A673 (cell line): ENCODE measurements at regions of chr11 and their contacts with region 1.

Region 1: GRCh38 chr11:112588252-112588694 is 327.6 kb upstream of the PLET1 start:
- DNase-seq: peak; percentile 97
- H3K4me3 ChIP-seq: no peak overlapping the region
- H3K27ac ChIP-seq: no peak overlapping the region
- H3K4me1 ChIP-seq: peaks cover 8% of the 10 kb centered on the region
- H3K27me3 ChIP-seq: no peaks in the 10 kb centered on the region
- CTCF ChIP-seq: peak; percentile 90

Region 2: DNA sequence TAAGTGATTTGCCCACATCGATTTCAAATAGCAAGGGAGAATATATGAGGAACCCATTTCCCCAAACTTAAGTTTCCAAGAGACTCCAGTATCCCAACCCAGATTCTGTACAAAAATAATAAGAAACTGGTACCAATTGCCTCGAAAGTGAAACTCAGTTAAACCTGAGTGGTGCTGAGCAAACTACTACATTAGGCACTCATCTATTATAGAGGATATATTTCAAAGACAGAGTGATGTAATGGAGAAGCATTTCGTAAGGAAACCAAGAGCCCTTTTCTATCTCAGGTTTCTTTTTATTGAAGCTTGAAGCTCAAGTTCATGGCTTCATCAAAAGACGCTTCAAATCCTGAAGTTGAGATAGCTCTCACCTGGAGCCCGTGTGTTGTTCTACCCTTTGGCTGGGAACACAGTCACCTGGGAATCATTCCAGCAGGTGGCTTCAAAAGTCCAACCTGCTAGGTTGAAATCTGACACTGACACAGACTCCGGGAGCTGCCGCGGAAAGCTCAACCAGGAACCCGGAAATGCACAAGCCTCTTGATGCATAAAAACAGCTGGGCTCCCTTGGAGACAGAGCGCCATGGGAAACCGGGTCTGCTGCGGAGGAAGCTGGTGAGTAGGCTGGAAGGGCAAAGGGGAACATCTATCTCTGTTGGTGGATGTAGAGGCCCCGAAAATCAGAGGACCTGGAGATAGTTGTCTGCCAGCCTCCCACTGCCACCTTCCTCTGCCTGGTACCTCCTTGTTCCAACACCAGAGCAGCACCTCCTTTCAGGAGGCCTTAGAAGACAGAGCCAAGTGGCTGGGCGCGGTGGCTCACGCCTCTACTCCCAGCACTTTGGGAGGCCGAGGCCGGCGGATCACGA is 669.6 kb before region 1 on chr11 and contains the start of gene C11orf52:
- CTCF ChIA-PET with region 1: no interaction called
- POLR2A ChIA-PET with region 1: no interaction called
- intact Hi-C with region 1: no loop called
- DNase-seq: peak; percentile 91
- H3K4me3 ChIP-seq: no peak within 1 kb of the TSS
- H3K27ac ChIP-seq: peak within 1 kb of the TSS; percentile 46
- H3K4me1 ChIP-seq: peaks cover 43% of the 10 kb centered on the region
- H3K27me3 ChIP-seq: no peaks in the 10 kb centered on the region
- CTCF ChIP-seq: no peak
- total RNA-seq, gene C11orf52: 1.4 and 1.5 TPM in 2 replicates

Region 3: DNA sequence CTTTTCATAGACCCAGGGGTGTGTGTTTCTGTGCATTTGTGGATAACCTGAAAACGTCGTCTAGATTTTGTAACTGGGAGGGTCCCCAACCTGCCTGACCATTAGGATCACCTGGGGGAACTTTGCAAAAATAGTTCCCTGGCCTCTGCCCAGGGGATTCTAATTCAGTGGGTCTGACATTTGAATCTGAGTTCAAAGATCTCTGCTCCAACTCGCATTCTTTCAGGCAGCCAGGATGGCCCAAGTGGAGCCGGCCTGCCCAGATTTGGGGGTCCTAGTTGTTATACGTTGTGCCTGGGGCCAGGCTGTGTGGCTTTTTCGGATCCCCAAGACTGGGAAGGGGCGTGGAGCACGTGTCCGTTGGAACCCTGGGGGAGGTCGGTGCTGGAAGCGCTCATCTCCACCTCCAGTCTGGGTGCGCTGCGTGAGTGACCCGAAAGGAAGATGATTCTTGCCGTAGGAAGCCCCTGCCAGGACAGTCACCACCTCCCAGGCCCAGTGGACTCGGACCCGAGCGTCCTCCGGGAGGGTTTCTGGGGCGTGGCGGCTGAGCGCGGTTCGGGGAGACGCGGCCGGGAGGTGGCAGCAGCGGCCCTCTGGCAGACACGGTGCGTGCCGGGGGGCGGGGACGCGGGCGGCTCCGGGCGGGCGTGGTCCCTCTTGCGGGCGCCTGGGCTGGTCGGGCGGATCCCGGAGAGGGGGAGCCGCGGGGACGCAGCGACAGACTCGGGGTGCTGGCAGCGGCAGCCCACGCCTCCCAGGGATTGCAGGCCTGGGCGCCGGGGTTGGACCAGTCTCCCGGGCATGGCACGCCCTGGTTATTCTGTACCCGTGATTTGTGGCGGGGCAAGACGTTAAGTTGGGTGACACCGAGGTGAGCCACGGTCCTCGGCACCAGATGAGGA is 298.4 kb before region 1 on chr11:
- CTCF ChIA-PET with region 1: no interaction called
- POLR2A ChIA-PET with region 1: no interaction called
- intact Hi-C with region 1: loop called (anchors 2 kb)
- DNase-seq: peak; percentile 93
- H3K4me3 ChIP-seq: peak overlapping the region; percentile 64
- H3K27ac ChIP-seq: peak overlapping the region; percentile 92
- H3K4me1 ChIP-seq: peaks cover 44% of the 10 kb centered on the region
- H3K27me3 ChIP-seq: no peaks in the 10 kb centered on the region
- CTCF ChIP-seq: peak; percentile 85

Region 4: DNA sequence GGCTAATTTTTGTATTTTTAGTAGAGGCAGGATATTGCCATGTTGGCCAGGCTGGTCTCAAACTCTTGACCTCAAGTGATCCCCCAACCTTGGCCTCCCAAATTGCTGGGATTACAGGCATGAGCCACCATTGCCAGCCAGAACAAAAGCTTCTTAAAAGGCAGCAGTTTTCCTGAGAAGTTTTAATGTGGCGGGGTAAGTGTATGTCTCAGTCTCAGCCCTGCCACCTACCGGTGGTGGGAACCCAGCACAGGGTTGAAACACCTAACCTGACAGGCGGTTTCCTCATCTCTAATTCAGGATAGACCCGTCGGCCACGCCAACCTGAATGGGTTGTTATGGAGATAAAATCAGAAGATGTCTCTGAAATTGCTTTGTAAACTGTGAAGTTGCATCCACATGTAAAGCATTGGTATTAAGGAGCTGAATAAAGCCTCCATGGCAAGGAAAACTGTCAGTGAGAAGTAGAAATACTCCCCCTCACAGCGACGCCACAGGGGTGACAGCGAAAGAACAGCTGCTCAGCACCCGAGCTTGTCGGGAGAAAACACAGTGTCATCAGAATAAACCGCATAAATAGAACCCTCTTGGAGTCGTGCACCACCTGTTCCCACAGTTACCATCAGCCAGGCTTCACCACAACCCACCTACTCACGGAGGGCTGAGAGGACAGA is 207.0 kb after region 1 on chr11:
- CTCF ChIA-PET with region 1: interaction called, 40 read pairs
- POLR2A ChIA-PET with region 1: no interaction called
- intact Hi-C with region 1: loop called (anchors 1 kb)
- DNase-seq: peak; percentile 81
- H3K4me3 ChIP-seq: no peak overlapping the region
- H3K27ac ChIP-seq: no peak overlapping the region
- H3K4me1 ChIP-seq: no peaks in the 10 kb centered on the region
- H3K27me3 ChIP-seq: no peaks in the 10 kb centered on the region
- CTCF ChIP-seq: peak; percentile 81

Region 5: GRCh38 chr11:112817376-112817775 is 229.1 kb after region 1 on chr11:
- CTCF ChIA-PET with region 1: no interaction called
- POLR2A ChIA-PET with region 1: no interaction called
- intact Hi-C with region 1: no loop called
- DNase-seq: no peak
- H3K4me3 ChIP-seq: no peak overlapping the region
- H3K27ac ChIP-seq: no peak overlapping the region
- H3K4me1 ChIP-seq: no peaks in the 10 kb centered on the region
- H3K27me3 ChIP-seq: no peaks in the 10 kb centered on the region
- CTCF ChIP-seq: no peak

Region 6: GRCh38 chr11:113113801-113114706 is 525.8 kb after region 1 on chr11:
- CTCF ChIA-PET with region 1: interaction called, 25 read pairs
- POLR2A ChIA-PET with region 1: no interaction called
- intact Hi-C with region 1: loop called (anchors 1 kb)
- DNase-seq: peak; percentile 77
- H3K4me3 ChIP-seq: no peak overlapping the region
- H3K27ac ChIP-seq: no peak overlapping the region
- H3K4me1 ChIP-seq: no peaks in the 10 kb centered on the region
- H3K27me3 ChIP-seq: no peaks in the 10 kb centered on the region
- CTCF ChIP-seq: peak; percentile 86

Region 7: DNA sequence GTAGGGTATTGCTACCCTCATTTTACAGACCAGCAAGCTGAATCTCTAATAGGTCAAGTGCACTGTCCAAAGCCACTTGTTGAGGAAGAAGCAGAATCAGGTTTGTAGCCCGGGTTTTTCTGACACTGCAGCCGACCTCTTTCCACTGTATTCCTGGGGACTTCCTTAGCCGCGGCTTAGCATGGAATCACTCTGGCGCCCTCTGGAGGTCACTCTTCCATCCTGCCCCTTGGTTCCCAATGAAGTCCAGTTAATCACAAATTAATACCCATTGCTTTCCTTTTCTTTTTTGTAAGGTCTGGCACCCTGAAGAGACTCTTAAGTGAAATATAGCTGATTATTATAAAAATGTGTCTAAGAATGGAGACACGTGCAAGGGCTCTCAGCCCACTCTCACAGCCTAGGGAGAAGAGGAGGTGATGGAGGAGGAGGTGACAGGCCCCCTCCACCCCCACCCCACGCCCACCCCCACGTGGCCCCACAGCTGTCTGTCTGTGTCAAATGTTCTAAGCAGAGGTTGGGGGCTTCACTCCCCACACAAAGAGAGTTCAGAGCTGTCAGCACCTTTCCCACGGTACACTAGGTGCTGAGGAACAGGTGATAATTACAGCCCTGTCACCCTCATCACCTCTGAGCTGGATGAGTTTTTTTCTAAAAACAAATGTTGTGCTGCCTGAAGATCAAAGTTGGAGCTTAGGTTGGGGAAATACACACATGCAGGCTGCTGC is 944.6 kb after region 1 on chr11:
- CTCF ChIA-PET with region 1: no interaction called
- POLR2A ChIA-PET with region 1: no interaction called
- intact Hi-C with region 1: loop called (anchors 10 kb)
- DNase-seq: peak; percentile 83
- H3K4me3 ChIP-seq: no peak overlapping the region
- H3K27ac ChIP-seq: no peak overlapping the region
- H3K4me1 ChIP-seq: no peaks in the 10 kb centered on the region
- H3K27me3 ChIP-seq: no peaks in the 10 kb centered on the region
- CTCF ChIP-seq: peak; percentile 97